HepG2 (cell line): ENCODE measurements at regions of chr17 and their contacts with region 1.

Region 1: DNA sequence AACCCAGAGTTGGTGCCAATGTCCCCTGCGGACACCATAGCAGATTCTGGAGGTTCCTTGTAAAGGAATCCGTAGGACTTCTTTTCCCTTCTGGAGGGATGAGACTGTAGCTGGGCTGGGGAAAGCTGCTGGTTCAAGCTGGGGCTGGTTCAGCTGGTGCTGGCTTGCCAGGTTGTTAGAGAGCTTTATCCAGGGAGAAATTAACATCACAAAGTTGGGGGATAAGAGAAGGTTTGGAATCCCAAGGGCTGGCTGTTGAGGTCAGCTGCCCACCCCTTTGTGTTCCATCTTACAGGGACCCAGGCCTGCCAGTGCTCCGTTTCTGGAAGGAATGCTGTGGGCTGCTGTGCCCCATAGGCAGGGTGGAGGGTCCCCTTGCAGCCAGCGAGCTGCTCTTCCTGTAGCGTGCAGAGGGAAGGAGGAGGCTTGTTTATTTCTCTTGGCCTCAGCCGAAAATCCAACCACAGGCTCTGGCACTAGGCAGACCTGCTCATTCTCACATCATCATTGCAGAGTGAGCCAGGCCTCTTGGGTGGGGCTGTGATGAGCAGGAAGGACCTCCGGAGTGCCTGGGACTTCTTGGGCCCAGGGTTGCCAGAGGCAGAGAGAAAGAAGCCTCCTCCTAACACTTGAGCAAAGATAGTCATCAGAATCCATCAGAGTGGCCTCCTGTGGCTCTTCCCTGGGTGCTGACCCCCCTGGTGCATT is 251.1 kb downstream of the SEC14L1 start:
- DNase-seq: no peak
- ATAC-seq: peak; percentile 7
- H3K4me3 ChIP-seq: peak overlapping the region; percentile 25 to 62 (median 34)
- H3K27ac ChIP-seq: peak overlapping the region; percentile 91
- H3K4me1 ChIP-seq: peaks cover 90% of the 10 kb centered on the region
- H3K27me3 ChIP-seq: no peaks in the 10 kb centered on the region
- CTCF ChIP-seq: no peak
- EP300 ChIP-seq: no peak
- POLR2A ChIP-seq: no peak
- RAD21 ChIP-seq: no peak

Region 2: GRCh38 chr17:77331301-77331864 is 60.4 kb before region 1 on chr17:
- CTCF ChIA-PET with region 1: no interaction called
- POLR2A ChIA-PET with region 1: no interaction called
- in situ Hi-C with region 1: no loop called
- intact Hi-C with region 1: loop called (anchors 2 kb)
- DNase-seq: peak; percentile 84
- ATAC-seq: peak; percentile 85
- H3K4me3 ChIP-seq: peak overlapping the region in 1 of 3 experiments; percentile 35; a peak in 1 of 6 replicates
- H3K27ac ChIP-seq: no peak overlapping the region
- H3K4me1 ChIP-seq: peaks cover 49% of the 10 kb centered on the region
- H3K27me3 ChIP-seq: no peaks in the 10 kb centered on the region
- CTCF ChIP-seq: peak; percentile 99
- EP300 ChIP-seq: no peak
- POLR2A ChIP-seq: no peak
- RAD21 ChIP-seq: peak; percentile 99

Region 3: DNA sequence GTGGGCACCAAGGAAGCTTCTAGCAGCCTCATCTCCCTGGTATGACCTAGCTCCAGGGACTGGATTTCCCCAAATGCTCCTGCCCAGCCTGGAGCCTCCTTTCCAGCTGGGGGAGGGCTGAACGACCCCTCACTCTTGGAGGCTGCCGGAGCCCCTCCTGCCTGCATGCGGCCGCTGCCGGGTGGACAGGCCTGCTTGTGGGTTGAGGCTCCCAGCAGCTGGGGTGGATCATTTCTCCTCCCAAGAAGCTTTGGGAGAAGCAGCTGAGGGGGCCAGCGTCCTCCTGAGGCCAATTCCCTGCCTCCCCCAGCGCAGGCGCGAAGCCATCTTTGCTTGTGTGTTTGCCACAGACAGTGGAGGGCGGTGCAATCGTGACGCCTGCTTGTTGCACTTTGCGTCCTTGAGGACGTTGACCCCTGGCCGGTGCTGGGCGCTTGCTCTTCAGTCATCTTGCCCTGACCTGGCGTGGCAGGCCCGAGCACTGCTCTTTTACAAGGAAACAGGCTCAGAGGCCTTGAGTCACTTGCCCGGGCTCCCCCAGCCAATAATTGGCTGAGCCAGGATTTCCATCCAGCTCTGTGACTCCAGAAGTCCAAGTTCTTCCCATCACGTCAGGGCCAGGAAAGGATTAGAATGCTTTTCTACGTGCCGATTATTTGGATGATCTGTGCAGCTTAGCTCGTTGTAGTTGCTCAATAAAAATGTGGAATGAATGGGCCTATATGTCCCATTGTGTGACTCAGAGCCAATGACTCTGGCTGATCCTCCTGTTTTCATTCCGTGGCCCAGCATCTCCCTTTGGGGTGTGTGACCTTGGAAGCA is 37.2 kb before region 1 on chr17:
- CTCF ChIA-PET with region 1: no interaction called
- POLR2A ChIA-PET with region 1: interaction called, 23 read pairs
- in situ Hi-C with region 1: no loop called
- intact Hi-C with region 1: no loop called
- DNase-seq: peak; percentile 93
- ATAC-seq: peak; percentile 80
- H3K4me3 ChIP-seq: peak overlapping the region; percentile 7 to 39 (median 12); a peak in 3 of 6 replicates
- H3K27ac ChIP-seq: peak overlapping the region; percentile 79
- H3K4me1 ChIP-seq: peaks cover 73% of the 10 kb centered on the region
- H3K27me3 ChIP-seq: no peaks in the 10 kb centered on the region
- CTCF ChIP-seq: peak; percentile 66
- EP300 ChIP-seq: peak in 1 of 2 experiments; percentile 70; a peak in 3 of 4 replicates
- POLR2A ChIP-seq: peak; percentile 26 to 32; a peak in 1 of 4 replicates
- RAD21 ChIP-seq: 0 out of 2 replicates have a peak, but pooled peaks have one; percentile 44

Region 4: GRCh38 chr17:77372444-77373298 is 19.2 kb before region 1 on chr17:
- CTCF ChIA-PET with region 1: no interaction called
- POLR2A ChIA-PET with region 1: interaction called, 88 read pairs
- in situ Hi-C with region 1: no loop called
- intact Hi-C with region 1: loop called (anchors 1 kb)
- DNase-seq: peak; percentile 94
- ATAC-seq: peak; percentile 75
- H3K4me3 ChIP-seq: peak overlapping the region; percentile 76 to 91 (median 88); a peak in 5 of 6 replicates
- H3K27ac ChIP-seq: peak overlapping the region; percentile 71
- H3K4me1 ChIP-seq: peaks cover 65% of the 10 kb centered on the region
- H3K27me3 ChIP-seq: no peaks in the 10 kb centered on the region
- CTCF ChIP-seq: peak; percentile 63
- EP300 ChIP-seq: peak in 1 of 2 experiments; percentile 37; a peak in 1 of 4 replicates
- POLR2A ChIP-seq: no peak; a peak in 1 of 4 replicates
- RAD21 ChIP-seq: peak; percentile 55

Region 5: GRCh38 chr17:77410470-77410869 is 18.6 kb after region 1 on chr17:
- CTCF ChIA-PET with region 1: no interaction called
- POLR2A ChIA-PET with region 1: interaction called, 16 read pairs
- in situ Hi-C with region 1: no loop called
- intact Hi-C with region 1: no loop called
- DNase-seq: no peak
- ATAC-seq: no peak
- H3K4me3 ChIP-seq: no peak overlapping the region
- H3K27ac ChIP-seq: no peak overlapping the region
- H3K4me1 ChIP-seq: peaks cover 18% of the 10 kb centered on the region; the same call in 1 of the 2 replicates
- H3K27me3 ChIP-seq: no peaks in the 10 kb centered on the region
- CTCF ChIP-seq: no peak
- EP300 ChIP-seq: no peak
- POLR2A ChIP-seq: no peak
- RAD21 ChIP-seq: no peak

Region 6: DNA sequence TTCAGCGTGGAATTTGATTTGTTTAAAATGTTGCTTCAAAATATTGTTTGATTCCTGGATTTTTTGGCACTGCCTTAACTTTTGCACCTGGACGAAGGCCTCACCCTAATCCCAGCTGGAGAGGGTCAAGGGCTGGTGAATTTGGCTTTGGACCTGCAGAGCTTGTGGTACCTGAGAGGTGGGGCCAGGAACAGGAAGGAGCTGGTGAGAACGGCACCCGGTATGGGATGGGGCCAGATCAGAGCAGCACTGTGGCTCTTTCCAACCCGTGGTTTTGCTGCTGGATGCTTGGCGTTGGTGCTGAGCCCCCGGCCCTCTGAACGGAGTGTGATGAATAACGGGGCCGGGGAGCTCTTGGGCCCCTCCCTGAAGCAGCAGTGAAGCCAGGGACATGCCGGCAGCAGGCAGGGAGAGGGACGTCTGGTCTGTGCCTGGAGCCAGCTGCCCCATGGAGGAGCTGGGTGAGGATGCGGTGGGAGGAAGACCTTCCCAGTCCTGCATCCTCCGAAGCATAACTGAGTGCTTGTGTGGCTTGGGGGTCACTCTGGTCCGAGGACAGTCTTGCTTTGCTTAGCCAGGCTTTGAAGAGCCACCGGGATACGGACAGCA is 24.4 kb after region 1 on chr17:
- CTCF ChIA-PET with region 1: no interaction called
- POLR2A ChIA-PET with region 1: interaction called, 16 read pairs
- in situ Hi-C with region 1: no loop called
- intact Hi-C with region 1: loop called (anchors 2 kb)
- DNase-seq: no peak
- ATAC-seq: no peak
- H3K4me3 ChIP-seq: no peak overlapping the region
- H3K27ac ChIP-seq: no peak overlapping the region
- H3K4me1 ChIP-seq: peaks cover 47% of the 10 kb centered on the region
- H3K27me3 ChIP-seq: no peaks in the 10 kb centered on the region
- CTCF ChIP-seq: no peak
- EP300 ChIP-seq: no peak
- POLR2A ChIP-seq: no peak
- RAD21 ChIP-seq: no peak

Region 7: GRCh38 chr17:77429919-77430752 is 38.3 kb after region 1 on chr17:
- CTCF ChIA-PET with region 1: no interaction called
- POLR2A ChIA-PET with region 1: interaction called, 13 read pairs
- in situ Hi-C with region 1: no loop called
- intact Hi-C with region 1: loop called (anchors 1 kb)
- DNase-seq: peak; percentile 97
- ATAC-seq: peak; percentile 79
- H3K4me3 ChIP-seq: peak overlapping the region in 1 of 3 experiments; percentile 0; a peak in 1 of 6 replicates
- H3K27ac ChIP-seq: peak overlapping the region; percentile 61
- H3K4me1 ChIP-seq: peaks cover 50% of the 10 kb centered on the region
- H3K27me3 ChIP-seq: no peaks in the 10 kb centered on the region
- CTCF ChIP-seq: peak; percentile 96
- EP300 ChIP-seq: peak in 1 of 2 experiments; percentile 49; a peak in 1 of 4 replicates
- POLR2A ChIP-seq: no peak
- RAD21 ChIP-seq: peak; percentile 97